Posterior vena cava (tissue), 2 donors: ENCODE measurements at regions of chr3 and their contacts with region 1.

Region 1: GRCh38 chr3:71903112-71903495 is 118.2 kb upstream of the PROK2 start:
- DNase-seq: no peak

Region 2: DNA sequence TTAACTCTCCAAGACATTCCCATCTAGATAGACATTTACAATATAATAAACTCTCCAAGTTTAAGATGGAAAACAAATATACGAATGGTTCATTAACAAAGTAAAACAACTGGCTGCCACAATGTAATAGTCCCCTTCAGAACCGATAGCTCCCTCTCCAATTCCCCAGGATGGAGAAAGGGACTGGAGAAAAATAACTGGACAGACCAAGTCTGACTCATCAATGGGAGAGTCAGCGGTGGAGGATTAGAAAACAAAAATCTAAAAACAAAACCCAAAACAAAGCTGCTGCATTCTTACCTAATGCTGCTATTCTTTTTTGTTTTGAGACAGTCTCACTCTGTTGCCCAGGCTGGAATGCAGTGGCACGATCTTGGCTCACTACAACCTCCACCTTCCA is 477.1 kb after region 1 on chr3:
- intact Hi-C with region 1: loop called in 1 of 2 experiments (anchors 5 kb)
- DNase-seq: no peak